ENCODE measurements at regions of chr11 and their contacts with region 1.

Region 1: DNA sequence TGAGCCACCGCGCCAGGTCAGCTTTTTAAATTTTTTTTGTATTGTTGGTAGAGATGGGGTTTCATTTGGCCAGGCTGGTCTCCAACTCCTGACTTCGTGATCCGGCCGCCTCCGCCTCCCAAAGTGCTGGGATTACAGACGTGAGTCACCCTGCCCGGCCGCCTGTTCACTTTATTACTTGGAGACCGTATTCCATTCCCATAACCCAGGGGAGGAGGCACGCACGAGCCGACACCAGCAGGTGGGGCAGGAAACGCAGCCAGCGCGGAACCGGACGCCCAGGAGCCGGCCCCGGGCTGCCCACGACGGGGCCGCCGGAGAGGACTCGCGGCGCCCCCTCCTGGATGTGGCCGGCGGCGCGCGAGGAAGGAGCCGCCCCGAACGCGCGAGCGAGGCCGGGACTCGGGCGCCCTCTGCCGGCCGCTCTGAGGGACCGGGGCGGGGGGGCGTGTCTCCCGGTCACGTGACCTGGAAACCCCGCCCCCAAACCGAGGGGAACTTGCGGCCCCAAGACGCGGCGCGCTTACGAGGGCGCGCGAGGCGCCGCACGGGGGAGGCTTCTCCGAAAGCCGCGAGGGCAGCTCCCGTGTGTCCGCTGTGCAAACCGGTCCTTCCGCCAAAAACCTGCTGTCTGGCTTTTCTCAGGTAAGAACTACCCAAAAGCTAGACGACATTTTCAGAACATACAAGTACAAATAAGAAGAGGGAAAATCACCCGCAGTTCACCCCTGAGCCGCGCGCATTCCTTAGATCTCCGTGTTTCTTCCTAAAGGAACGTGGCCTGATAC is 11.6 kb upstream of the RNH1 start:
- DNase-seq: peak; percentile 65
- H3K4me3 ChIP-seq: peak overlapping the region; percentile 49
- CTCF ChIP-seq: peak; percentile 87

Region 2: DNA sequence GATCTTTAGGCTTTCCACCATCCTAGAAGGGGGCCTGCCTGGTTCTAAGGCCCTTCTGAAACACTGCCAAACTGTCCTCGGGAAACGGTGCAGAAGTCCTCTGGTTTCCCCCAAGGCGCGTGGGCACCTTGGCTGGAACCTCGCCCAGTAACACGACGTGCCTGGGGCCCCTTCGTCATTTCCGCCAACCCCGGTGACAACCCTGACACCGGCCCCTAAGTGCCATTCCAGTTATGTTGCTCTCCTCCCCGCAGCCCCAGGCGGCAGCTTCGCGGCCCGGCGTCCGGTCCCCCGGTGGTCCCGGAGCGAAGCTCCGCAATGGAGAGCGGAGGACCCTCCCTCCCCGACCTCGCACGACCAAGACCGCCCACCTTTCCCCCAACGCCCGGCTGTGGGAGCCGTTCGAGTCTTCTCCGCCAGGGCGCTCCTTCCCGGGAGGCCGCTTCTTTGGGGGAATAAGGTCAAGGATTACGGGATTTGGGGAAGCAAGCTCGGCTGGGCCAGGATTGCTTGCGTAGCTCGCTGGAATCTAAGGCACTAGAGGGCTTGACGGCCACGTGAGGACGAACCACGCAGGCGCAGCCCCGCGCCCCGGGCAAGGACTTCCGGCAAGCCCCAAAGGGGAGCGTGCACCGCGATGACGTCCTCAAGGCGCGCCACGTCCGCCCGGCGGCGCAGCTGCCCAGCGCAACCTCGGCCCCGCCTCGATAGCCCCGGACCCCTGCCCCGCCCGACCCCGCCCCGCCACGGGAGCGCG is 12.2 kb before region 1 on chr11:
- CTCF ChIA-PET with region 1: interaction called, 57 read pairs
- POLR2A ChIA-PET with region 1: interaction called, 3 read pairs
- DNase-seq: peak; percentile 87
- H3K4me3 ChIP-seq: peak overlapping the region; percentile 97
- CTCF ChIP-seq: peak; percentile 1

Region 3: DNA sequence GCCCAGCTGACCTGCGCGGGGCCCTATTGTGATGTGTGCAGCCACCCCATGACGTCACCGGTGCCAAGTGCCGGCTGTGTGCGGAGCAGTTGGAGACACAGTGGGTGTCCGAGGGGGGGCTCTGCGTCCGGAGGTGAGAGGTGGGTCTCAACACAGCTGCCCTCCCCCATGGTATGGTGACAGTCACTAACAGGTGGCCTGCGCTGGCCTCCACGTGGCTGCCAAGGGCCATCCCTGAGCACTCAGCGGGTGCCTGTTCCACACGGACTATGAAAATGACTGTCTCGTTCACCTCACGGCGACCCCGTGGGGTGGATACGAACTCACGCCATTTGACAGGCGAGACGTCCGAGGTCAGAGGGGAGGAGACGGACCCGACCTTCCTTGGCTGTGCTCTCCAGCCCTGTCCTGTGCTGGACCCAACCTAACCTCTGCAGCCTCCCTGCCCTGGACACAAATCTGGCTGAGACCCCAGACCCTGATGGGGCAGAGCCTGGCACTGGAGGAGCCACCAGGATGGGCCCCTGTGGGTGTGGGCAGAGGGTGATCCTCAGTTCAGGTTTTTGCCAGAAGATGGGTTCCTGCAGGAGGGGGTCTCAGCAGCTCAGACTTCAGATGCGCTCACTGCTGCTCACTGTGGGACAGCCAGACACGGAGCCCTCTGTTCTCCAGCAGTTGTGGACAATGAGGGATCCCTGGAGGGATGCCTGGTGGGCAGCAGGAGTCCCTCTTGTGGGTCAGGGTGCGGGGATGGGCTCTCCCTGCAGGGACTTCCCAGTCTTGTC is 10.3 kb after region 1 on chr11:
- CTCF ChIA-PET with region 1: interaction called, 45 read pairs
- POLR2A ChIA-PET with region 1: no interaction called
- DNase-seq: no peak
- H3K4me3 ChIP-seq: no peak overlapping the region
- CTCF ChIP-seq: no peak

Region 4: DNA sequence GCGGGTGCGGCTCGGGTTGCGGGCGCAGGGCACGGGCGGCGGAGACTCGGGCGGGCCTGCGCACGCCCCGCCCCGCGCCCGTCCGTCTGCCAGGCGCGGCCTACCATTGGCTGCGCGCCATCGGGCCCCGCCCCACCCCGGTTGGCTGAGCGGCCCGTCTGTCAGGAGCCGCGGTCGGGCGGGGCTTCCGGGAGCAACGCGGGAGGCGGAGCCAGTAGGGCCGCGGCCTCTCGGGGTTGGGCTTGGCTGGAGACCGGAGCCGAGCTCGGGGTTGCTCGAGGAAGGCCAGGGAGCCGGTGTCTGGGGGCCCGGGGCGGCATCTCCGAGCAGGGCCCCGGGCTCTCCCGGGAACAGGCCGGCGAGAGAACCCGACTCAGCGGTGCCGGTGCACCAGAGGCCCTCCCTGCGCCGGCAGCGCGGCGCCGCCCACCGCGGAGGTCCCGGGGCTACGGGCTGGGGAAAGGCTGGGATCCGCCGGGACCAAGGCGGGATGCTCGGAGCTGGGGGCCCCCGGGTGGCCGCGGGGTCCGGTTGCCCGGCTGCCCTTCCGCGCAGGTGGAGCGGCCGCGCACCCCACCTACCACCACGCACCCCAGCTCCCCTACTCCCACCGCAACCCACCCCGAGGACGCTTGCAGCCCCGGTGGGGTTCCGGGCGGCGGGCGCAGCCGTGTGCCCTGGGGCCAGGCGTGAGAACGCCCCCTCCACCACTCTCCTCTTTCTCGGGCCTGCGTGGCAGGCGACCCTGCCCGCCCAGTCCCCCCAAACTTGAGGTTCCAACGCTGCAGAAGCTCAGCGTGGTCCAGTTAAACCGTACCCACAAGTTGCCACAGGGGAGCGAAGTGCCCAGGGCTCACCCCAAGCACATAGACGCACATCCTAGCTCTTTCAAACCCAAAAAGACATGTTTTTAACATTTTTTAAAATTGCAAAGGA is 17.1 kb after region 1 on chr11 and contains the start of gene HRAS:
- CTCF ChIA-PET with region 1: interaction called, 45 read pairs
- POLR2A ChIA-PET with region 1: no interaction called
- DNase-seq: no peak
- H3K4me3 ChIP-seq: peak within 1 kb of the TSS; percentile 73
- CTCF ChIP-seq: no peak